Left cardiac atrium (tissue), 4 donors: ENCODE measurements at regions of chr10 and their contacts with region 1.

Region 1: DNA sequence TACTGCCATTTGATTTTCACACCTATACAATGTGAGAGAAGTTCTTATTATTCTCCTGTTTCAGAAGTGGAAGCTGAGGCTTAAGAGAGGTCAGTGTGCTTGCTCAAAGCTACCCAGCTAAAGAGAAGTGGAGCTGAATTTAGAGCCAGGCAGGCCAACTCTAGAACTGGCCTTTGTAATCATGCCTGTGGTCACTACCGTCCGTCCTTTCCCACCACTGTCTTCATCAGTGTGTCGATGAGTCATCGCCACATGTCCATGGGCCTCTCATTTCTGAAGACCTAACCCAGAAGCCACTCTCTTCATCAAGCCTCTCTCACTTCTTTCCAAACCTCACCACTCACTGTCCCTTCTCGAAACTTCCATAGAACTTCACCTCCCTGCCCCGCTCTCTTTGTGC is 237.8 kb downstream of the KIAA1217 start:
- DNase-seq: no peak
- ATAC-seq: peak in 1 of 2 donors; percentile 49

Region 2: DNA sequence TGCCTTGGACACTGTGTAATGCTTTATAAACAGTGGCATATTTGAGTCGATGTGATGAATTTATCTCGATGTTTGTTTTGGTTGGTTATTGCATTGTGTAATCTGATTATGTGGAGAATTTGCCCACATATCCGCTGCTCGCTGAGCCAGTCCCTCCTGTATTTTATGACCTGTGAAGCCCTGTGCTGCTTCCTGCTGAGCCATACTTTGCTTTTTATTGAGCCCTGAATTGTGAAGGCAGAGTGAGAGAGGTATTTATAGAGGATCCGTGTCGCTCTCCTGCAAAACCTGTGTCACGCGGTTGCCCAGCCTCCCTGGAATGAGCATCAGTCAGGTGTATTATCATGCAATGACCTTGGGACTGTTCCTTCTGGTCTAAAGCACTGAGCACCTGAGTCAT is 23.3 kb after region 1 on chr10:
- intact Hi-C with region 1: loop called in 1 of 2 experiments (anchors 1 kb)
- DNase-seq: no peak
- ATAC-seq: no peak

Region 3: GRCh38 chr10:24556750-24557742 is 110.3 kb after region 1 on chr10:
- intact Hi-C with region 1: no loop called
- DNase-seq: no peak
- ATAC-seq: peak; percentile 22 to 44